HCT116 (cell line): ENCODE measurements at regions of chr1 and their contacts with region 1.

Region 1: DNA sequence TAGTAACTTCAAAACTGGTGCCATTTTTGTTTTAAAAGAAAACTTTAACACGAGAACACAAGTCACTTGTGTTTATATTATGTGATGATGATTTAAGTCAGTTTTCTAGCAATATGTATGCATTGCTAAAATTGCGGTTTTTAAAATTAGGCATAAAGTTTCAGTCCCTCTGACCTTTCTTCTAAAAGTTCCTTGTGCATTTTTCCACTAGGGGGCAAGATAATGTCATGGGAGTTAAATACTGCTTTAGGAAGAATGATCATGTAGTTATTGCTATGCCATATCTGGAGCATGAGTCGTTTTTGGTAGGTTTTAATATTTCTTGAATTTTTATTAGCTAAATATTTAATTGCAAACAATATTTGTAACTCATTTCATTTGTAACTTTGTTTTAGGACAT is 10.7 kb downstream of the CDC7 start:
- DNase-seq: peak; percentile 16
- ATAC-seq: peak; percentile 42; the same call in 1 of the 2 replicates
- H3K4me3 ChIP-seq: no peak overlapping the region
- H3K27ac ChIP-seq: no peak overlapping the region
- H3K4me1 ChIP-seq: no peaks in the 10 kb centered on the region
- H3K27me3 ChIP-seq: no peaks in the 10 kb centered on the region
- CTCF ChIP-seq: peak; percentile 51 to 63 (median 55); a peak in 5 of 6 replicates
- POLR2A ChIP-seq: no peak
- RAD21 ChIP-seq: peak; percentile 67

Region 2: GRCh38 chr1:91924146-91924545 is 412.8 kb after region 1 on chr1:
- CTCF ChIA-PET with region 1: interaction called, 16 read pairs
- POLR2A ChIA-PET with region 1: no interaction called
- RAD21 ChIA-PET with region 1: no interaction called
- intact Hi-C with region 1: loop called (anchors 1 kb)
- DNase-seq: no peak
- ATAC-seq: no peak
- H3K4me3 ChIP-seq: no peak overlapping the region
- H3K27ac ChIP-seq: no peak overlapping the region
- H3K4me1 ChIP-seq: peaks cover 4 to 9% of the 10 kb centered on the region in 2 experiments; a peak in 1 of 4 replicates
- H3K27me3 ChIP-seq: no peaks in the 10 kb centered on the region
- CTCF ChIP-seq: no peak
- POLR2A ChIP-seq: no peak
- RAD21 ChIP-seq: no peak

Region 3: DNA sequence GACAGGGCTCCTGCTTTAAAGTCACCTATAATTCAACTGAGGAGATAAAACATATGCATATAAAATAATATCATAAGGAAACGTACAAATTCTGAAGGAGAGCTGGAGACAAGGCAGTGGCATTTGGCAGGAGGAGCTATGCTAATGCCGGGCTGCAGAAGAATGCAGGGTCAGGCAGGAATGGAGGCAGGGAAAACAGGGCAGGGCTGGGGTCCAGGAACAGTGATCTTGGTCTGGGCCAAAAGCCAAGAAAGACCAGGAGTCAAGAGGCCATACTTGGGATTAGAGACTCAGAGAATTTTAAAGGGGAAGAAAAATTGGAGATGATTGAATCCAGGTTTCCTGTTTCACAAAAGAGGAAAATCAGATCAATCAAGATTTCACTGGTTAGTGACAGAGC is 417.9 kb after region 1 on chr1:
- CTCF ChIA-PET with region 1: interaction called, 16 read pairs
- POLR2A ChIA-PET with region 1: no interaction called
- RAD21 ChIA-PET with region 1: interaction called in 1 of 2 experiments, 5 read pairs
- intact Hi-C with region 1: loop called (anchors 1 kb)
- DNase-seq: no peak
- ATAC-seq: no peak
- H3K4me3 ChIP-seq: no peak overlapping the region
- H3K27ac ChIP-seq: no peak overlapping the region
- H3K4me1 ChIP-seq: peaks cover 2 to 4% of the 10 kb centered on the region in 2 experiments; a peak in 1 of 4 replicates
- H3K27me3 ChIP-seq: no peaks in the 10 kb centered on the region
- CTCF ChIP-seq: no peak
- POLR2A ChIP-seq: no peak
- RAD21 ChIP-seq: no peak

Region 4: DNA sequence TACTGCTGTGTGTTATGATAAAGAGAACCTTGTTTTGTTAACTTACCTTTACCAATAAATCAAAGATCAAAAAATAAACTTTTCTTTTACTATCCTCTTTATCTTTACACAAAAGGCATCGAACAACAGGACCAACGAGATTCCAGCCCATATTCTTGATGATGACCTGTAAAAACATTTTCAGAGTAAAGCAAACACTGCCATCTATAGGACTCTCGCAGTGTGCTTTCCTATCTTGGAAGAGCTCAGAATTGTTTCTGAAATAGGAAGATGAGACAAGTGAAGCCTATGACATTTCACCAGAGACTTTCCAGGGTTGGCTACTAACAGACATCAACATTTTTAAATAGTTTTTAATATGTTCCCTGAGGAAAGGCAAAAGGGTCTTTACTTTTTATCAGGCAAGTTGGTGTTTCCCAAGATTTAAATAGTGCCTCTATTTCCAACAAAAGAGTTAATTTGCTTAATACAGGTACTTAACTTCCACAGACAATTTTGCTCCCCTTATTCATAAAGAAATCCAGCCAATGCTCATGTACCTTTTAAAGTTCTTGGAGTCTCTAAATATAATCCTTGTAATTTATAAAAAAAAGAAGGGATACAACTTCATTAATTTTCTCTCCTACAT is 780.1 kb after region 1 on chr1:
- CTCF ChIA-PET with region 1: interaction called, 6 read pairs
- POLR2A ChIA-PET with region 1: no interaction called
- RAD21 ChIA-PET with region 1: no interaction called
- intact Hi-C with region 1: loop called (anchors 5 kb)
- DNase-seq: peak; percentile 52
- ATAC-seq: peak; percentile 70
- H3K4me3 ChIP-seq: no peak overlapping the region
- H3K27ac ChIP-seq: no peak overlapping the region
- H3K4me1 ChIP-seq: no peaks in the 10 kb centered on the region
- H3K27me3 ChIP-seq: no peaks in the 10 kb centered on the region
- CTCF ChIP-seq: peak; percentile 67 to 79 (median 69); a peak in 5 of 6 replicates
- POLR2A ChIP-seq: no peak
- RAD21 ChIP-seq: peak; percentile 85